A673 (cell line): ENCODE measurements at regions of chr15 and their contacts with region 1.

Region 1: DNA sequence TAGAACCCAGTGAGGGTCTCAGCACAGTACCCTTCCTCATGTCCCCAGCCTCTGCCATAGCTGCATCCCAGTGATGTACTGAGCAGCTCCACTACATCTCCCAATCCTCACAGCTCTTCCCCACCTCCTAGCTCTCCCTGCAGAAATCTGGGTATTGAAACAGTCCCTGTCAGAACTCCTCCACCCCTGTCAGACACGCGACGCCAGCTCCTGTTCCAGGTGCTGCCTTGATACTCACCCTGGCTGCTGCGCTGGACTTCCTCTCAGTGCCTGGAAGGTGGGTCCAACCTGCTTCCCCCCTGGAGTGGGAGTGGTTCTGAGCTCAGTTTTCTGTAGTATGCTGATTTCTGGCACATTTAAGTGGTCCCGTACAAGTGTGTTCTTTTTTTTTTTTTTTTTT is 160.9 kb upstream of the SLCO3A1 start:
- DNase-seq: no peak
- H3K4me3 ChIP-seq: no peak overlapping the region
- H3K27ac ChIP-seq: no peak overlapping the region
- H3K4me1 ChIP-seq: no peaks in the 10 kb centered on the region
- H3K27me3 ChIP-seq: no peaks in the 10 kb centered on the region
- CTCF ChIP-seq: no peak

Region 2: GRCh38 chr15:91807122-91807521 is 114.5 kb after region 1 on chr15:
- CTCF ChIA-PET with region 1: no interaction called
- POLR2A ChIA-PET with region 1: interaction called, 12 read pairs
- intact Hi-C with region 1: no loop called
- DNase-seq: peak; percentile 7
- H3K4me3 ChIP-seq: no peak overlapping the region
- H3K27ac ChIP-seq: peak overlapping the region; percentile 66
- H3K4me1 ChIP-seq: peaks cover 40% of the 10 kb centered on the region
- H3K27me3 ChIP-seq: no peaks in the 10 kb centered on the region
- CTCF ChIP-seq: no peak